Sigmoid colon (tissue), 7 donors: ENCODE measurements at regions of chr16 and their contacts with region 1.

Region 1: DNA sequence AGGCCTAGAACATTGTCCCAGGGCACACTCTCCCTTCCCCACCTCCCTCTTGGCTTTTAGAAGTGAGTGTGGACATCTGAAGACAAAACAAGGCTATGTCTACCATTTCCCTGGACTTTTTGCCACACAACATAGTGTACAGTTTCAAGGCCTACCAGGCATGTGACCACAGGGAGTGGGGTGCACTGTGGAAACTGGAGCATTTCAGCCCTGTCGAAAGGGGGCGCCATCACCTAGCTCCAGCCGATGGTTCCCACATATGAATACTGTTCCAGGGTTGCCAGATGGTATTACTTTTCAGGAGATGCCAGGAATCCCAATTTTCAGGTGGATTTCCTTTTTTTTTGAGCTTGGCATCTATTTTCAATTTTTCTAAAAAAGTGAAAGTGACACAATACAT is 140.7 kb downstream of the KATNIP start:
- DNase-seq: no peak
- H3K4me3 ChIP-seq: no peak overlapping the region
- H3K27ac ChIP-seq: no peak overlapping the region
- H3K4me1 ChIP-seq: no peaks in the 10 kb centered on the region
- H3K27me3 ChIP-seq: no peaks in the 10 kb centered on the region
- CTCF ChIP-seq: peak in 1 of 4 experiments; percentile 40
- EP300 ChIP-seq: no peak
- POLR2A ChIP-seq: no peak

Region 2: DNA sequence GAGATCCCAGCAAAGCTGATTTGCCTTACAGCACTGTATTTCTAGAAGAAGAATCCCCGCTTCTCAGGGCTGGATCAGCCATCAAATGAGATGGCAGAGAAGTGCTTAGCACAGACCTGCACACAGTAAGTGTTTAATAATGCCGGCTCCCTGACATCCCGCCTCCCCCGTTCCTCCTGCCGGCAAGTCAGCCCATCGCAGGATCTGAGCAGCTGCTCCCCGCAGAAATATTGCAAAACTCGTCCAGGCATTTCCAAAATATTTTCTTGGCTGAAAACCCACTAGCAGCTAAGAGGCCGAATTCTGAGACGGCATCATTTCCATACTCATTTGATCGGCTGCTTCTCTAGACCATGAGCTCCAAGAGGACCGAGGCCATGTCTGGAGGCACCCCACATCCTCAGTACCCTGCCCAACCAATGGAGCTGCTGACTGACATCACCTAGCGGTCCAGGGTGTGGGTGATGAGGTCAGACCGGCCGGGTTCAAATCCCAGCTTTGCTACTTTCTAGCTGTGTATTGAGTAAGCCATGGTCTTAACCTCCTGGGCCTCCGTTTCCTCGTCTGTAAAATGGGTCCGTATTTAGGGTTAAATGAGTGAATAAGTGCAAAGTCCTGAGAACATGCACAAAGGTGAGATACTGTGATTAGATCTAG is 110.8 kb after region 1 on chr16:
- intact Hi-C with region 1: no loop called
- DNase-seq: no peak
- H3K4me3 ChIP-seq: no peak overlapping the region
- H3K27ac ChIP-seq: no peak overlapping the region
- H3K4me1 ChIP-seq: no peaks in the 10 kb centered on the region
- H3K27me3 ChIP-seq: peaks cover 0 to 6% (median 0%) of the 10 kb centered on the region in 3 donors
- CTCF ChIP-seq: no peak
- EP300 ChIP-seq: no peak
- POLR2A ChIP-seq: no peak

Region 3: DNA sequence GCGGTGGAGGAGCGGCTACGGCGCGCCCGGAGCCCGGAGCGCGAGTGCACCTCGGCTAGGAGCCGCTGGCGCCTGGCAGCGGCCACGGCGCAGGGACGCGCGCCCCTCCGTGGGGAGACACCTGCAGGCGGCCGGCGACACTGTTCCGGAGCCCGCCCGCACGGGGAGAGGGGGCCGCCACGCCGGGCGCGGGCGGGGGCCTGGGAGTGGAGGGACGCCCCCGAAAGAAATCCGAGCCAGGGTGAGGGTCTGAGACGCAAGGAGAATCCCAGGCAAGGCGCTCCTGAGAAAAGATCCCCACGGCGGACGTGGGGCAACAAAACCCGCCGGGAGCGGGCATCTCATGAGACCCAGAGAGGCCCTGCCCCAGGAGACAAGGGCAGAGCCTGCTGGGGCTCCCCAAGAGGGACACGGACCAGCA is 373.0 kb after region 1 on chr16 and contains the start of gene GSG1L:
- intact Hi-C with region 1: loop called (anchors 10 kb)
- DNase-seq: no peak
- H3K4me3 ChIP-seq: peak within 1 kb of the TSS in 3 of 4 donors; percentile 20 to 33 (median 28)
- H3K27ac ChIP-seq: no peak within 1 kb of the TSS
- H3K4me1 ChIP-seq: peaks cover 0 to 15% (median 9%) of the 10 kb centered on the region in 4 donors
- H3K27me3 ChIP-seq: peaks cover 13 to 65% (median 33%) of the 10 kb centered on the region in 3 donors
- CTCF ChIP-seq: no peak
- EP300 ChIP-seq: no peak
- POLR2A ChIP-seq: no peak
- total RNA-seq, gene GSG1L: 0.28 to 0.66 (median 0.38) TPM